Activated naive CD4-positive, alpha-beta T cell treated with anti-CD3 and anti-CD28 coated beads for 36 hours (primary cell): ENCODE measurements at regions of chr19 and their contacts with region 1.

Region 1: GRCh38 chr19:13195678-13196077 is 45.5 kb downstream of the IER2 start:
- DNase-seq: peak; percentile 75
- H3K4me3 Mint-ChIP-seq: no peak overlapping the region
- H3K27ac Mint-ChIP-seq: no peak overlapping the region
- H3K4me1 Mint-ChIP-seq: peaks cover 25% of the 10 kb centered on the region
- H3K27me3 Mint-ChIP-seq: no peaks in the 10 kb centered on the region

Region 2: GRCh38 chr19:13155472-13156359 is 40.0 kb before region 1 on chr19:
- CTCF ChIA-PET with region 1: interaction called, 7 read pairs
- intact Hi-C with region 1: loop called (anchors 5 kb)
- DNase-seq: peak; percentile 86
- H3K4me3 Mint-ChIP-seq: peak overlapping the region; percentile 99
- H3K27ac Mint-ChIP-seq: peak overlapping the region; percentile 100
- H3K4me1 Mint-ChIP-seq: peaks cover 40% of the 10 kb centered on the region
- H3K27me3 Mint-ChIP-seq: no peaks in the 10 kb centered on the region

Region 3: DNA sequence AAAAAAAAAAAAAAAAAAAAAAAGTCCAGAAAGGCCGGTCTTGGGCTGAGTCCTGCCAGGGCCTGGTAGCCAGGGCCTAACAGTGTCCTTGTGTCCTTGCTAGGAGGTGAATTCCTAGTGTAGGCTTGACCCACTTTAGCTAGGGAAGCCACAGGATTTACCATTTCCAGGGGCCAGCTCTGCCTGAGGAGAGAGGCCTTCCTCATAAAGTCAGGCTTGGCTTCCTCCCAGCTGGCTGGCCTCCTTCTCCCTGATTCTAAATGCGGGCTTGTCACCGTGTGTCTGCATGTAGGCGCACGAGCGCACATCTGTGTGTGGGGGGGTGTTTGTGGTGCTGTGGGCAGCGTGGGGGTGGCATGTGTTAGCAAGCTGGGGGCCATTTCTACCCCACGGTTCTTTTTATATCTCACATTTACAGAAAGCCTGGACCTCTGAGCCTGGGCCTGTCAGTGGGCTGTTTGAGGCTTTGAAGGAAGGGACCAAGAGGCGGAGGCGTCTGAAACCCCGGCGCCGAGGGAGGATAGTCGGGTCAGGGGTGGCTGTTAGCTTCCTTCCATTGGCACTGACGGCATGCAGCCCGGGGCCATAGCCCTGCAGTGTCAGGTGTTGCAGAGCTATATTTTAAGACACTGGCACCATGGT is 13.8 kb before region 1 on chr19:
- CTCF ChIA-PET with region 1: interaction called, 23 read pairs
- intact Hi-C with region 1: no loop called
- DNase-seq: peak; percentile 36
- H3K4me3 Mint-ChIP-seq: no peak overlapping the region
- H3K27ac Mint-ChIP-seq: peak overlapping the region; percentile 53
- H3K4me1 Mint-ChIP-seq: peaks cover 28% of the 10 kb centered on the region
- H3K27me3 Mint-ChIP-seq: no peaks in the 10 kb centered on the region

Region 4: DNA sequence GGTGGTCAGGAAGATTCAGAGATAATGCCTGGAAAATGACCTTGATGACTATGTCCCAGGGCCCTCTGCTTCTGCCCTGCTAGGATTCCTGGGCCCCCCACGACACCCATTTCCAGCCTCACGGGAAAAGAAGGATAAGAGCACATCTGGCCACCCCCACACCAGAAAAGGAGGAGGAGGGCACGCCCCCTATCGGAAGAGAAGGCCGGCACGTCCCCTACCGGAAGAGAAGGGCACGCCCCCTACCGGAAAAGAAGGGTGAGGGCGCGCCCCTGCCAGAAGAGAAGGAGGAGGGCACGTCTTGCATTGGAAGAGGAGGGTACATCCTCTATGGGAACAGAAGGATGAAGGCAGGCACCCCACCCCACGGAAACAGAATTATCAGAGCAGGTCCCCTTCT is 38.8 kb after region 1 on chr19:
- CTCF ChIA-PET with region 1: interaction called, 10 read pairs
- intact Hi-C with region 1: loop called (anchors 1 kb)
- DNase-seq: peak; percentile 82
- H3K4me3 Mint-ChIP-seq: peak overlapping the region; percentile 4
- H3K27ac Mint-ChIP-seq: peak overlapping the region; percentile 50
- H3K4me1 Mint-ChIP-seq: peaks cover 13% of the 10 kb centered on the region
- H3K27me3 Mint-ChIP-seq: no peaks in the 10 kb centered on the region

Region 5: GRCh38 chr19:13277104-13277809 is 81.6 kb after region 1 on chr19:
- CTCF ChIA-PET with region 1: interaction called, 10 read pairs
- intact Hi-C with region 1: no loop called
- DNase-seq: peak; percentile 81
- H3K4me3 Mint-ChIP-seq: peak overlapping the region; percentile 11
- H3K27ac Mint-ChIP-seq: peak overlapping the region; percentile 64
- H3K4me1 Mint-ChIP-seq: peaks cover 15% of the 10 kb centered on the region
- H3K27me3 Mint-ChIP-seq: no peaks in the 10 kb centered on the region